ENCODE measurements at regions of chr3 and their contacts with region 1.

Region 1: DNA sequence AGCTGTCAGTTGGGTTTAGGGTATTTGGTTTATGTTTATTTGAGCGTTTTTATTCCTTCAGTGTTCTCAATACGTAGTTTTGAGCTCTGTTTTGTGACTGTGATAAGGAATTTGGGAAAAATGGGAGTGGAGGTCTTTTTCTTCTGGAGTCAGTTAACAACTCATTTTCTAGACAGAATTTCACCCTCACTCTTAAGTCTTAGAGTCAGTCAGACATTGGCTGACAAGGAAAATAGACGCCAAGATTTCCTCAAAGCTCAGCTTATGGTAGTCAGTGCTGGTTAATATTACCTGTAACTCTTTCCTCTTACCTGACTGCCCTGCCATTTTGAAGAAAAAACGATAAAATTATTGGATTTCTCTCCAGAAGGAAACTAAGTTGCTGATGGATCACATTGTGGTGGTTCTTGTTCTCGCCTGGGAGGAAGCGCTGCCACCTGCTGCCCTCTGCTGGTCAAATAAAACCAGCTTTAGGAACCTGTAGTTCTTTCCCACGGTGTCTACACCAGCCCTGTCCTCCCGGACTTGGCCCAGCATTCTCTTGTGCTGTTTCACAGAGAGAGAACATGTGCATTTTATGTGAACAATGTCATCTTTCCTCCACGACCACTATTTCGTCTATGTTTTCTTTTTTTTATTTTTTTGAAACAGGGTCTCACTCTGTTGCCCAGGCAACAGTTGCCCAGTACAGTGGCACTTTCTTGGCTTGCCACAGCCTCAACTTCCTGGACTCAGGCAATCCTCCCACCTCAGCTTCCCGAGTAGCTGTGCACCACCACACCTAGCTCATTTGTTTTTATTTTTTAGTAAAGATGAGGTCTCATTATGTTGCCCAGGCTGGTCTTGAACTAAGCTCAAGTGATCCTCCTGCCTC is 41.4 kb upstream of the UMPS start:
- DNase-seq: peak; percentile 82 to 93
- ATAC-seq: peak; percentile 98 to 99
- H3K4me3 ChIP-seq: no peak overlapping the region
- H3K27ac ChIP-seq: no peak overlapping the region
- H3K4me1 ChIP-seq: no peaks in the 10 kb centered on the region
- CTCF ChIP-seq: peak; percentile 96
- EP300 ChIP-seq: no peak
- POLR2A ChIP-seq: no peak
- RAD21 ChIP-seq: peak; percentile 94

Region 2: GRCh38 chr3:124569761-124570160 is 119.1 kb before region 1 on chr3:
- CTCF ChIA-PET with region 1: interaction called, 348 read pairs
- POLR2A ChIA-PET with region 1: no interaction called
- DNase-seq: no peak
- ATAC-seq: no peak
- H3K4me3 ChIP-seq: no peak overlapping the region
- H3K27ac ChIP-seq: no peak overlapping the region
- H3K4me1 ChIP-seq: peaks cover 5% of the 10 kb centered on the region; the same call in 1 of the 3 replicates
- CTCF ChIP-seq: no peak
- EP300 ChIP-seq: no peak
- POLR2A ChIP-seq: no peak
- RAD21 ChIP-seq: no peak

Region 3: DNA sequence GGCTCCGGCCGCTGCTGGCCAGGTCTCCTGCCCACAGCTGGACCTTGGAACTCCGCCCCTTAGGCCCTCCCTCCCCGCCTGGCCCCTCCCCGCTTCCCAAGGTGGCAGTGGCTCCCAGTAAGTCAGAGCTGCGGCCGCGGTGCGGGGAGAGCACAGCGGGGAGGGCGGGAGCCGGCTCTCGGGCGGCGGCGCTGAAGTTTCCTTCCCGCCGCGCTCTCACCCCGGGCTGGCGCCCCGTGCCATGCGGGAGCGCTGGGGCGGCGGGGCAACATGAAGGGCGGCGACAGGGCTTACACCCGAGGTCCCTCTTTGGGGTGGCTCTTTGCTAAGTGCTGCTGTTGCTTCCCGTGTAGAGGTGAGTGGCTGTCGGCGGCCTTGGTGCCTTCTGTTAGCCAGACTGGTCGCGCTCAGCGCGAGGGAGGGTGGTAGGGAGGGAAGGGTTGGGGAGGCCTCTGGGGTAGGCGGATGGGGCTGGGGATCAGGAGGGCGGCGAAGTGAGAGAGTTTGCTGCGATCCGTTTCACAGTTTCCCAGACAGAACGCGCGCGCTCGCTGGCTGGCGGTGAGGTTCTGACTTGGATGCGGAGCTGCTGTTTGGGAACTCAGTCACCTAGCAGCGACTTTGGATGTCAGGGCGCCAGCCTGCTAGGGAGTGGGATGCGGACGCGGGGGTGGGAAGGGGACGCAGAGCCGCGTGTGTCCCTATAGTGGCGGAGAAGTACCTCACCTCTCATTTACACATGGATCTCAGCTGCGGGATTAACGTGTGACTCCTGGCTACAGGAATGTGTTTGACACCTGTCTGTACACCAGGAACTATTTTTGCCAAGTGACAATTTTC is 104.0 kb before region 1 on chr3:
- CTCF ChIA-PET with region 1: interaction called, 18 read pairs
- POLR2A ChIA-PET with region 1: no interaction called
- DNase-seq: peak; percentile 69 to 91
- ATAC-seq: peak; percentile 96 to 98
- H3K4me3 ChIP-seq: peak overlapping the region; percentile 77
- H3K27ac ChIP-seq: peak overlapping the region; percentile 64 to 83; a peak in 5 of 6 replicates
- H3K4me1 ChIP-seq: peaks cover 3% of the 10 kb centered on the region; the same call in 1 of the 3 replicates
- CTCF ChIP-seq: no peak
- EP300 ChIP-seq: no peak
- POLR2A ChIP-seq: peak; percentile 12; the same call in 1 of the 2 replicates
- RAD21 ChIP-seq: no peak

Region 4: GRCh38 chr3:124663690-124664089 is 25.1 kb before region 1 on chr3:
- CTCF ChIA-PET with region 1: interaction called, 22 read pairs
- POLR2A ChIA-PET with region 1: no interaction called
- DNase-seq: peak; percentile 16 to 31
- ATAC-seq: peak; percentile 66 to 82; a peak in 5 of 6 replicates
- H3K4me3 ChIP-seq: no peak overlapping the region
- H3K27ac ChIP-seq: peak overlapping the region; percentile 45 to 76; a peak in 4 of 6 replicates
- H3K4me1 ChIP-seq: peaks cover 29% of the 10 kb centered on the region
- CTCF ChIP-seq: no peak
- EP300 ChIP-seq: no peak
- POLR2A ChIP-seq: no peak
- RAD21 ChIP-seq: no peak

Region 5: GRCh38 chr3:124700880-124701684 is 12.3 kb after region 1 on chr3:
- CTCF ChIA-PET with region 1: interaction called, 36 read pairs
- POLR2A ChIA-PET with region 1: no interaction called
- DNase-seq: no peak
- ATAC-seq: peak; percentile 43 to 56; a peak in 3 of 6 replicates
- H3K4me3 ChIP-seq: no peak overlapping the region
- H3K27ac ChIP-seq: no peak overlapping the region
- H3K4me1 ChIP-seq: peaks cover 8% of the 10 kb centered on the region; the same call in 2 of the 3 replicates
- CTCF ChIP-seq: no peak
- EP300 ChIP-seq: no peak
- POLR2A ChIP-seq: no peak
- RAD21 ChIP-seq: no peak